ENCODE measurements at regions of chr3 and their contacts with region 1.

Region 1: DNA sequence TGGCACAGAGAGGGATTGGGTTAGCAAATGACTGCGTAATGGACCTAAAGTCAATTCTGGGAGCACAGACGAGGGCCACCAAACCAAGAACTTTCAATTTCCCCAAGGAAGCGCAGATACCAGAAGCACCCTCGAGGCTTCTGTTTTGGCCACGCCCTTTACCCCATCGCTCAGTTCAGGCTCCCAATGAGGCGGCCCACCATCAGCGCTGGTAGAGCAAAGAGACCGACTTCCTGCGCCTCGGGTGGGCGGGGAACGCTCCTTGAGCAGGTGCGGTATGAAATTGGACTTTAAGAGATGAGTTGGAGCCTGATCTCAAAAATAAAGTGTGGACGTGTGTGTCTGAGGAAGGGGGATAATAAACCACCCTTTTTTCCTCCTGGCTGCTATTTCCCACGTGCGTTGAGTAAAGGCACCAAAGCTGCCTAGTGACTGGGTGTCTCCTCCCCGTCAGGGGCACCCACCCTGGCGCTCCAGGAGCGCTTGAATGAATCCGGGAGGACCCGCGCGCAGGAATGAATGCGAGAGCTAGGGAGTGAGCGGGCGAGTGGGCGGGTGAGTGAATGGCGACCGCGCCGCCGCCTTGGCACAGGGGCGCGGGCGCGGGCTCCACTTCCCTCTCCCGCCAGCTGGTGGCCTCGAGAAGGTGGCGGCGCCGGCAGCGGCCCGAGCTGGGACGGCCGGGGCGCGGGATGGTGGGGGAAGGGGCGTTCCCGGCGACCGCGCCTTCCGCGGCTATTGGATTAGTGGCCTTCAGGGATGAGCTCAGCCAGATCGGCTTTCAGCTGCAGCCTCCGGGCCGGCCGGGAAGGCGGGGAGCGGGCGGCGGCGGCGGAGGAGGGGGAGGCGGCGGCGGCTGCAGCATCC is at the start of gene SPSB4:
- DNase-seq: peak; percentile 50 to 76 (median 65)
- H3K4me3 ChIP-seq: peak within 1 kb of the TSS; percentile 44 to 78 (median 66)
- H3K27ac ChIP-seq: no peak within 1 kb of the TSS
- H3K4me1 ChIP-seq: peaks cover 0 to 25% (median 23%) of the 10 kb centered on the region in 4 experiments
- H3K27me3 ChIP-seq: peaks cover 14 to 83% (median 30%) of the 10 kb centered on the region in 5 experiments

Region 2: DNA sequence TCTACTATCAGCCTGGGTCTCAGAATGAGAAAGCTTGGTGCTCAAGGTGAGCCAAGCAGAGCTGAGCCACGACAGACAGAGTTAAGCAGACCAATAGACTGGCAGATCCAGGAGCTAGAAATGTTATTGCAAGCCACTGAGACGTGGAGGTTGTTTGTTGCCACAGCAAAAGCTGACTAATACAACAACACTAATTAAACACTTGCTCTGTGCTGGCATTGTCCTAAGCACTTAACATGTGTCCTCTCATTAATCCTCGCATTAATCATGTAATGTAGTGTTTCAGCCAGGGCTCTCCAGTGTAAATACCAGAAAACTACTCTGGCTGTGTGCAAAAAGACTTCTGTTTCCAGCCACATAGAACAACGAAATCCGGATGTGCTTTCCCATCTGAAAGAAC is 11.2 kb before region 1 on chr3:
- CTCF ChIA-PET with region 1: interaction called, 26 read pairs
- POLR2A ChIA-PET with region 1: no interaction called
- DNase-seq: no peak
- H3K4me3 ChIP-seq: no peak overlapping the region
- H3K27ac ChIP-seq: no peak overlapping the region
- H3K4me1 ChIP-seq: no peaks in the 10 kb centered on the region
- H3K27me3 ChIP-seq: peaks cover 0 to 7% (median 4%) of the 10 kb centered on the region in 5 experiments

Region 3: GRCh38 chr3:141104151-141104821 is 53.5 kb after region 1 on chr3:
- CTCF ChIA-PET with region 1: interaction called, 11 read pairs
- POLR2A ChIA-PET with region 1: no interaction called
- DNase-seq: no peak
- H3K4me3 ChIP-seq: no peak overlapping the region
- H3K27ac ChIP-seq: no peak overlapping the region
- H3K4me1 ChIP-seq: no peaks in the 10 kb centered on the region
- H3K27me3 ChIP-seq: no peaks in the 10 kb centered on the region

Region 4: GRCh38 chr3:141279077-141279967 is 228.5 kb after region 1 on chr3:
- CTCF ChIA-PET with region 1: no interaction called
- POLR2A ChIA-PET with region 1: no interaction called
- DNase-seq: peak; percentile 37 to 56 (median 53)
- H3K4me3 ChIP-seq: no peak overlapping the region
- H3K27ac ChIP-seq: no peak overlapping the region
- H3K4me1 ChIP-seq: peaks cover 0 to 12% (median 4%) of the 10 kb centered on the region in 4 experiments
- H3K27me3 ChIP-seq: no peaks in the 10 kb centered on the region

Measured in common myeloid progenitor, CD34-positive (primary cell).